Activated CD4-positive, alpha-beta T cell treated with anti-CD3 and anti-CD28 coated beads for 36 hours (primary cell): ENCODE measurements at regions of chr7 and their contacts with region 1.

Region 1: DNA sequence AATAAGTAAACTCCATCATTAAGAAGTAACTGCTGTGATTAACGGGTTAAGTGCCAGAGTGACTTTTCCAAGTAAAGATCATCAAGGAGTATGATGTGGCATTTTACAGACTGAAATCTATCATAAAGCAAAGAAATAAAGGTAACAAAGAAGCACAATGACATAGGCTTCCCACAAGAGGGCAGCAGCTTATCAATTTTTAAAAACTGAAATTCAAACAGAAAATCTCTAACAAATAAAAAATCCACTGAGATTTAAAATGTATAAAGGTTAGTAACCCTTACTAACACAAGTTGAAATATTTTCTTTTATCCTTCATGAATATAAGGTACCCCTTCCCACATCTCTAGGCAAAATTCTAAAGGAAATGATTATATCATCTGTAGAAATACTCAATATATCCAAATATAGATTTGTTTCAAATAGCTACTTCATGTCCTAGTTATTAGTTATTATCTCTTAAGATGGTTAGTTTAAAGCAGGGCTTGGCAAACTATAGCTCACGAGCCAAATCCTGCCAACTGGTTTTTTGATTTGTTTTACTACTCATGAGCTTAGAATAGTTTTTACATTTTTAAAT is 29.2 kb downstream of the FAM3C start:
- DNase-seq: peak; percentile 31
- ATAC-seq: no peak
- H3K4me3 Mint-ChIP-seq: no peak overlapping the region
- H3K27ac Mint-ChIP-seq: no peak overlapping the region
- H3K4me1 Mint-ChIP-seq: peaks cover 10% of the 10 kb centered on the region
- H3K27me3 Mint-ChIP-seq: no peaks in the 10 kb centered on the region

Region 2: GRCh38 chr7:121278120-121279021 is 88.6 kb before region 1 on chr7:
- CTCF ChIA-PET with region 1: no interaction called
- POLR2A ChIA-PET with region 1: no interaction called
- intact Hi-C with region 1: no loop called
- DNase-seq: no peak
- ATAC-seq: peak; percentile 92
- H3K4me3 Mint-ChIP-seq: no peak overlapping the region
- H3K27ac Mint-ChIP-seq: no peak overlapping the region
- H3K4me1 Mint-ChIP-seq: peaks cover 20% of the 10 kb centered on the region
- H3K27me3 Mint-ChIP-seq: peaks cover 33% of the 10 kb centered on the region

Region 3: DNA sequence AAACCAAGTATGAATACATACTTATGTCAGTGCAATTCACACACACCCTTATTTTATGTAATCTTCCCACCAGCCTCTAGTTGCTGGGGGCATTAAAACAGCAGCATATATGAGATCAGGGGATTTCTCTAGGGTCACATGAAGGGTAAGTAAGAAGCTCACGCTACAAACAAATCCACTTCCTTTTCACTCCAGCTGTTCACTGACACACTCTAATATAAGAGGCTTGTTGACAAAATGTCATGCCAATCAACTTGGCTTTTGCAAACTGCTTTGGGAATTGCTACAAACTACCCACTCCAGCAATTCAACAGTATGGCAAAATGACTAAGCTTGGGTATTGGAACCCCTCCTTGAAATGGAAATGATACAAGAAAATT is 18.8 kb after region 1 on chr7:
- CTCF ChIA-PET with region 1: interaction called, 16 read pairs
- POLR2A ChIA-PET with region 1: no interaction called
- intact Hi-C with region 1: no loop called
- DNase-seq: no peak
- ATAC-seq: peak; percentile 53
- H3K4me3 Mint-ChIP-seq: no peak overlapping the region
- H3K27ac Mint-ChIP-seq: no peak overlapping the region
- H3K4me1 Mint-ChIP-seq: peaks cover 67% of the 10 kb centered on the region
- H3K27me3 Mint-ChIP-seq: no peaks in the 10 kb centered on the region

Region 4: DNA sequence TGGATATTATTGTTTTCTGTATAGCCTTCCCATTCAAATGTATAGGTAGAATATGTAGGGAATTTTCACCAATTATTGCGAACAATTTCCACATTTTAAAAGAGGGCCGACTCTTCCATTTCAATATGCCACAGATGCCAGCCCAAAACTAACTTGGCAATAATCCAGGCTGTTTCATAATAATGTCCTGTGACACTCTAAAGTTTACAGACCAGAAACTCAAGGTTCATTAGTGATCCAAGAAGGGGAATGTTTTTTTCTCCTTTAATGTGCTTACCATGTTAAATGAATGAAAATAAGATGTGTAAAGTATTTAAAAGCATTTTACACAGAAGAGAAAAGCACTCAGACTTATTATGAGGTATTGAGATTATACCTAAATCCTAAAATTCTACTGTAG is 92.2 kb after region 1 on chr7:
- CTCF ChIA-PET with region 1: no interaction called
- POLR2A ChIA-PET with region 1: no interaction called
- intact Hi-C with region 1: no loop called
- DNase-seq: no peak
- ATAC-seq: no peak
- H3K4me3 Mint-ChIP-seq: no peak overlapping the region
- H3K27ac Mint-ChIP-seq: no peak overlapping the region
- H3K4me1 Mint-ChIP-seq: no peaks in the 10 kb centered on the region
- H3K27me3 Mint-ChIP-seq: peaks cover 5% of the 10 kb centered on the region

Region 5: DNA sequence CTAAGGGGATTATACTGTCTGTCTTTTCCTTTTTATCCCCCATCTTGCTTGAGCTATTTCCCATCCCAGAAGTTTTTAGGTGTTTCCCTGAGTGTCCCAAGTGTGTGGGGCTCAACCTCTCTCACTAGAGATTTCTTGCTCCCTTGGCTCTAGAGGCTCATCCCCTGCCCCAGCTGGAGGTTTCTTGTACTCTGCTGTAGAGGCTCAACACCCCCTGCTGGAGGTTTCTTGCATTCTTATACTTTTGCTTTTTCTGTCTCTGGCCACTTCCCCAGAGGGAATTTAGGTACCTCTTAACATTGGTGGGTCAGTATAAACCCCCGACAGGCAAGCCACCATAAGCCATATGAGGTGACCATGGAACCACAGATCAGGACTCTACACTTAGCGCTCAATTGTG is 143.4 kb after region 1 on chr7:
- CTCF ChIA-PET with region 1: interaction called, 10 read pairs
- POLR2A ChIA-PET with region 1: no interaction called
- intact Hi-C with region 1: loop called in 1 of 2 experiments (anchors 1 kb)
- DNase-seq: peak; percentile 13
- ATAC-seq: no peak
- H3K4me3 Mint-ChIP-seq: no peak overlapping the region
- H3K27ac Mint-ChIP-seq: no peak overlapping the region
- H3K4me1 Mint-ChIP-seq: no peaks in the 10 kb centered on the region
- H3K27me3 Mint-ChIP-seq: peaks cover 19% of the 10 kb centered on the region